ENCODE measurements at regions of chrX and their contacts with region 1.

Region 1: GRCh38 chrX:111445486-111445885 is 33.5 kb upstream of the DCX start:
- DNase-seq: no peak
- H3K4me3 Mint-ChIP-seq: no peak overlapping the region
- H3K27ac Mint-ChIP-seq: no peak overlapping the region
- H3K4me1 Mint-ChIP-seq: no peaks in the 10 kb centered on the region
- H3K27me3 Mint-ChIP-seq: peaks cover 6% of the 10 kb centered on the region

Region 2: DNA sequence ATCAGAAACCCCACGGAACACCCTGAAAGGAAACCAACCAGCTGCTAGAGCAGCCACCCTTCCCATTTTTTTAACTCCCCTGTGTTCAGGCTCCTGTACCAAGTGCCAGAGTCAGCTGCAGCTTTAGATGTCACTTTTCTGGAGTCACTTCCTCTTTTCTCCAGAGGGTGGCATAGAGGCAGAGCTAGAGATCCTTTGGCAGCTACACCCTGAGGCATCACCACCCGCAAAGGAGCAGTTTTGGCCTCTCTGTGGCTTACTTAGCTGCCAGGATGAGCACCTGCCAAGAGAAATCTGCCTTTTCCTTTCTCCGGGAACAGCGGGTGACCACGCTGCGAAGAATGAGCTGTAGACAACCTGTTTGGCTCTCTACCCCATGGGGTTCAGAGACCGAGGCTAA is 591.9 kb before region 1 on chrX:
- CTCF ChIA-PET with region 1: no interaction called
- intact Hi-C with region 1: loop called (anchors 10 kb)
- DNase-seq: no peak
- H3K4me3 Mint-ChIP-seq: no peak overlapping the region
- H3K27ac Mint-ChIP-seq: no peak overlapping the region
- H3K4me1 Mint-ChIP-seq: no peaks in the 10 kb centered on the region
- H3K27me3 Mint-ChIP-seq: peaks cover 2% of the 10 kb centered on the region

Region 3: DNA sequence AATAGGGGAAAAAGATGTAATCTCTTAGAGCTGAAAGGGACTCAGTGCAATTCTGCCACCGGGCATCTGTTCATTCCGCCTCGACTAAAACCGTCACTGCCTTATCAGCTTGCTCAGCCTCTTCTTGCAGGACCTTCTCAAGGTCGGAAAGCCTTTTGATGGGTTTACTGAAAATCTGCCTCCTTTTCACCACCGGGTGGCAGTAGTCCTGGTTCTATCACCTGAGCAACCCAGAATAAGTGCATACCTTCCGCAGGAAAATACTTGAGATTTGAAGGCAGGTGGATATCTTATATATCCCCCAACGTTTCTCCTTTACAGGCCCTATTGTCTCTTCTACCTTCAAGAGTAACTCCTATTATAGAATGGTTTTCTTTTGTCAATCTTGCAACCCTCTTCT is 452.9 kb before region 1 on chrX:
- CTCF ChIA-PET with region 1: no interaction called
- intact Hi-C with region 1: loop called (anchors 5 kb)
- DNase-seq: peak; percentile 19
- H3K4me3 Mint-ChIP-seq: no peak overlapping the region
- H3K27ac Mint-ChIP-seq: no peak overlapping the region
- H3K4me1 Mint-ChIP-seq: no peaks in the 10 kb centered on the region
- H3K27me3 Mint-ChIP-seq: peaks cover 1% of the 10 kb centered on the region

Region 4: GRCh38 chrX:111168314-111168713 is 277.2 kb before region 1 on chrX:
- CTCF ChIA-PET with region 1: interaction called, 3 read pairs
- intact Hi-C with region 1: loop called (anchors 2 kb)
- DNase-seq: peak; percentile 16
- H3K4me3 Mint-ChIP-seq: no peak overlapping the region
- H3K27ac Mint-ChIP-seq: no peak overlapping the region
- H3K4me1 Mint-ChIP-seq: no peaks in the 10 kb centered on the region
- H3K27me3 Mint-ChIP-seq: no peaks in the 10 kb centered on the region